Kidney (tissue), 22 donors: ENCODE measurements at regions of chr2 and their contacts with region 1.

Region 1: GRCh38 chr2:138827426-138828054 is 47.4 kb upstream of the NXPH2 start:
- DNase-seq: peak in 3 of 5 donors; percentile 32 to 88 (median 73)
- H3K4me3 ChIP-seq: no peak overlapping the region
- H3K27ac ChIP-seq: no peak overlapping the region
- H3K4me1 ChIP-seq: no peaks in the 10 kb centered on the region
- H3K27me3 ChIP-seq: no peaks in the 10 kb centered on the region
- CTCF ChIP-seq: peak; percentile 57

Region 2: GRCh38 chr2:137900421-137901141 is 927.0 kb before region 1 on chr2:
- intact Hi-C with region 1: loop called (anchors 10 kb)
- DNase-seq: no peak
- H3K4me3 ChIP-seq: no peak overlapping the region
- H3K27ac ChIP-seq: no peak overlapping the region
- H3K4me1 ChIP-seq: no peaks in the 10 kb centered on the region
- H3K27me3 ChIP-seq: no peaks in the 10 kb centered on the region
- CTCF ChIP-seq: no peak

Region 3: DNA sequence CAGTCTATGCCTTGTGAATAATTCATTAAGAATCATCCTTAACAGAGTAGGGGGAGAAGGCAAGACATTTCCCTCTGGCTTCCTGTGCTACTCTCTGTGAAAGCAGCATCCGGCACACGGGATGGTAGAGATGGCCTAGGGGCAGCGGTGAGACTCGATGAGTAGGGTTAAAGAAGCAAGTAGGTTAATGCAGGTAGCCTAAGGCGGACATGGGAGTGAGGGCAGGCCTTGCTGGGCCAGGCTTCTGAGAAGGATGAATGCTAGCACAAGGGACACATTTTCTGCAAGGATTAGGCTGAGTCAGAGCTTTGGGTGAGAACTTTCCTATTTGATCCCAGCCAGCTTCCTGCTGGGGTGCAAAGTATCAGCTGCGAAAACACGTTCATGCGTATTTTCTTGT is 128.1 kb before region 1 on chr2:
- intact Hi-C with region 1: no loop called
- DNase-seq: no peak
- H3K4me3 ChIP-seq: no peak overlapping the region
- H3K27ac ChIP-seq: no peak overlapping the region
- H3K4me1 ChIP-seq: no peaks in the 10 kb centered on the region
- H3K27me3 ChIP-seq: no peaks in the 10 kb centered on the region
- CTCF ChIP-seq: no peak

Region 4: DNA sequence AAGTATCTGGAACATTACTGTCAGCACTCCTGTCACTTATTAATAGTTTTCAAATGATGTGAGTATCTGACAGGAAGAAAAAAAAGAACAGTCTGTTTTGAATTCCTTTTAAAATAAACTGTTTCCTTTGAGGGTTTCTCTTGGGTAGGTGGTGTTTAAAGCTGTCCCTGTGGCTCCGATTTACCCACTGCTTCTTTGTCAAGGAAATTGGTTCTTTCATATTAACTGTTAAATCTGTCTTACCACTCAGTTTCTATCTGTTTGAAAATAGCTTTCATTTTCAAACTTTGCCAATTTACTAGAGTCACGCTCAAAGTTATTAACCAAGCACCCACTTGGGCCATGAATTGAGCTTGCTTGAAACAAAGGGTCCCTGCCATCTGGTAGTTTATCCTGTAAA is 567.3 kb after region 1 on chr2:
- intact Hi-C with region 1: no loop called
- DNase-seq: no peak
- H3K4me3 ChIP-seq: no peak overlapping the region
- H3K27ac ChIP-seq: no peak overlapping the region
- H3K4me1 ChIP-seq: no peaks in the 10 kb centered on the region
- H3K27me3 ChIP-seq: no peaks in the 10 kb centered on the region
- CTCF ChIP-seq: no peak